PC-3 (cell line): ENCODE measurements at regions of chr10 and their contacts with region 1.

Region 1: GRCh38 chr10:75019370-75019769 is 92.1 kb upstream of the SAMD8 start:
- DNase-seq: peak; percentile 88
- ATAC-seq: peak; percentile 20; the same call in 1 of the 2 replicates
- H3K4me3 ChIP-seq: no peak overlapping the region
- H3K27ac ChIP-seq: no peak overlapping the region
- H3K4me1 ChIP-seq: peaks cover 14% of the 10 kb centered on the region
- H3K27me3 ChIP-seq: no peaks in the 10 kb centered on the region
- CTCF ChIP-seq: peak; percentile 98

Region 2: GRCh38 chr10:74262856-74263255 is 756.5 kb before region 1 on chr10:
- CTCF ChIA-PET with region 1: interaction called, 3 read pairs
- POLR2A ChIA-PET with region 1: interaction called, 4 read pairs
- intact Hi-C with region 1: loop called (anchors 1 kb)
- DNase-seq: no peak
- ATAC-seq: no peak
- H3K4me3 ChIP-seq: no peak overlapping the region
- H3K27ac ChIP-seq: no peak overlapping the region
- H3K4me1 ChIP-seq: peaks cover 12% of the 10 kb centered on the region
- H3K27me3 ChIP-seq: no peaks in the 10 kb centered on the region
- CTCF ChIP-seq: no peak

Region 3: DNA sequence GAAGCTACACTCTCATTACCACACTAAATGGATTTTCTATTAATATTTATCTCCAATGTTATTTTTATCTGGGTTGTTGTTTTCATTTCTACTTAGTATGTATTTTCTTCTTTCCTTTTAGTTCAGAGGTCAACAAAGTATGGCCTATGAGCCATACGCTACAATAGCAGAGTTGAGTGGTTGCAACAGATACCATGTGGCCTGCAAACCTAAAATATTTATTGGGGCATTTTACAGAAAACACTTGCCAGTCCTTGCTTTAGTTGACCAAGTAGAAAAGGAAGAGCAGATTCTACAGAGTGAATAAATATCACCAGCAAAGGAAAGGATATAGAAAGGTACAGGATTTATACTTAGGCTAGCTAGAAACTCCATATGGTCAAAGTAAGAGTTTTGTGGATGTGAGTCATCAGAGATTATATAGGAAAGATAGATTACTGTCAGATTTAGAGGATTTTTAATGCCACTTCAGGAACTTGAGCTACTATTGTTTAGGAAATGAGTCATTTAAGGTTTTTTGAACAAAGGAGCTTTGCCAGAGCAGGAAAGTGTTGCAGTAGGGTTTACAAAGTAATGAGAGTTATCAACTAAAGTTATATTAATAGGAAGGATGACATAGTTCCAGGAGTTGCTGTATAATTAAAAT is 516.3 kb before region 1 on chr10:
- CTCF ChIA-PET with region 1: no interaction called
- POLR2A ChIA-PET with region 1: no interaction called
- intact Hi-C with region 1: loop called (anchors 1 kb)
- DNase-seq: peak; percentile 100
- ATAC-seq: peak; percentile 88
- H3K4me3 ChIP-seq: 0 out of 2 replicates have a peak overlapping the region, but pooled peaks have one; percentile 1
- H3K27ac ChIP-seq: peak overlapping the region; percentile 69
- H3K4me1 ChIP-seq: peaks cover 44% of the 10 kb centered on the region
- H3K27me3 ChIP-seq: no peaks in the 10 kb centered on the region
- CTCF ChIP-seq: no peak

Region 4: DNA sequence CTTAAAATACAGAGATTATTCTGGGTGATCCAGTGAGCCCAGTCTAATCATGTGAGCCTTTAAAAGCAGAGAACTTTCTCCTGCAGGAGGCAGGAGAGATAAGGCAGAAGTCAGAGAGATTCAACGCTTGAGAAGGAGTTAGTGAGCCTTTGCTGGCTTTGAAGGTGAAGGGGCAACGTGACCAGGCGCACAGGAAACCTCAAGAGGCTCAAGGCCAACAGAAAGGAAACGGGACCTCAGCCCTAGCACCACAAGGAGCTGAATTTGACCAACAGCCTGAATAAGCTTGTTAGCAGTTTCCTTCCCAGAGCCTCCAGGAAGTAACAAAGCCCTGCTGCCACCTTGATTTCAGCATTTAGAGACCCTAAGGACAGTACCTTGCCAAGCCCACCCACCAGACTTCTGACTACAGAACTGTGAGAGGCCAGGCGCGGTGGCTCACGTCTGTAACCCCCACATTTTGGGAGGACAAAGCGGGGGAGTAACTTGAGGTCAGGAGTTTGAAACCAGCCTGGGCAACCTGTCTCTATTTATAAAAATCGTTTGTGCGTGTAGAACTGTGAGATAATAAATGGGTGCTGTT is 280.3 kb before region 1 on chr10:
- CTCF ChIA-PET with region 1: interaction called, 4 read pairs
- POLR2A ChIA-PET with region 1: no interaction called
- intact Hi-C with region 1: loop called (anchors 1 kb)
- DNase-seq: peak; percentile 71
- ATAC-seq: peak; percentile 64
- H3K4me3 ChIP-seq: no peak overlapping the region
- H3K27ac ChIP-seq: no peak overlapping the region
- H3K4me1 ChIP-seq: peaks cover 10% of the 10 kb centered on the region
- H3K27me3 ChIP-seq: no peaks in the 10 kb centered on the region
- CTCF ChIP-seq: peak; percentile 85

Region 5: DNA sequence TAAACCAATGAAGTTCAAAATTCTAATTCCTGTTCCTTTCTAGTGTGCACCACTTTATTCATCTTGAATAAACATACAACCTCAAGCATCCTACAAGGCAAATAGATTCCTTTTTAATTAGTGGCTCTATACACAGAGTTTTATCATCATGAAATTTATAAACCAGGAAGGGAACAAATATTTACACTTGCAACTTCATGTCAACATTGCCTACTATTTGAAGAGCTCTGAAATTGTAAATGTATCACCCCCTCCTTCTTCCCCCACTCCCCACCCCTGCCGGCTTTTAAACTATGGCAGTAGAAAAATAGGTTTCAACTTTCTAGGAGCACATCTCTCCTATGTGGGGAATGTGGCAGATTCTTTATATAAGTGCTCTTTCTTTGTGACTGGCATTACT is 143.4 kb before region 1 on chr10:
- CTCF ChIA-PET with region 1: interaction called, 6 read pairs
- POLR2A ChIA-PET with region 1: no interaction called
- intact Hi-C with region 1: loop called (anchors 1 kb)
- DNase-seq: peak; percentile 99
- ATAC-seq: peak; percentile 92
- H3K4me3 ChIP-seq: peak overlapping the region; percentile 1; the same call in 1 of the 2 replicates
- H3K27ac ChIP-seq: peak overlapping the region; percentile 67
- H3K4me1 ChIP-seq: peaks cover 56% of the 10 kb centered on the region
- H3K27me3 ChIP-seq: no peaks in the 10 kb centered on the region
- CTCF ChIP-seq: no peak

Region 6: DNA sequence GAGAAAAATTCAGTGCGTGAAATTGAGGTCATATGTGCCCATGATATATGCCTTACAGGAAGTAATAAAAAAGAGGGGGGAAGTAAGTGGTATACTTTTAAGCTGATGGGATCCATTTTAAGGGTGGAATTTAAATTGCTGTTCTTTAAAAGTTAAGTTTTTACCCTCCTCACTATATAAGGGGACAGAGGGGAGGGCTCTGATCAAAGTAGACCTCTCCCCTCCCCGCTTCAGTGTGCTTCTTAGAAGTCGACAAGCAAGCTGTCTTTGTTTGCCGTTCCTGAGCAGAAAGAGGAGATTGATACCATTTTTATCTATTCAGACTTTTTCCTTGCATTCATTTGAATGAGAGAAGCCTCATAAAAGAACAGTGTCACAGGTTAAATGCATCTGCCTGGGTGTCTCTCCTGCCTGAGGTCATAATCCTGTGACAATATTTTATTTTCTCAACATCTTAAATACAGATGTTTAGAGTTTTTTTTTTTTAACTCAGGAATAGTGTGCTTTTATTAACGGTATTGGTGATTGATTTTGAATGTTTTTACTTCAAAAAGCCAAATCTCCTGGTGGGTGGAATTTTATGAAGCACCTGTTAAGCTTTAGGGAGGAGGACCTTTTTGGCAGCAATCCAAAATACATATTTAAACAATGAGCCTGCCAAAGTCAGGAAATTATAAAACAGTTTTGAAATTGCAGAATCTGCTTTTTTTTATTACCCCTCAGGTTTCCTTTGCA is 51.3 kb before region 1 on chr10:
- CTCF ChIA-PET with region 1: interaction called, 16 read pairs
- POLR2A ChIA-PET with region 1: no interaction called
- intact Hi-C with region 1: no loop called
- DNase-seq: peak; percentile 100
- ATAC-seq: peak; percentile 73
- H3K4me3 ChIP-seq: peak overlapping the region; percentile 10
- H3K27ac ChIP-seq: peak overlapping the region; percentile 28
- H3K4me1 ChIP-seq: peaks cover 25% of the 10 kb centered on the region
- H3K27me3 ChIP-seq: no peaks in the 10 kb centered on the region
- CTCF ChIP-seq: no peak; the same call in 1 of the 2 replicates

Region 7: DNA sequence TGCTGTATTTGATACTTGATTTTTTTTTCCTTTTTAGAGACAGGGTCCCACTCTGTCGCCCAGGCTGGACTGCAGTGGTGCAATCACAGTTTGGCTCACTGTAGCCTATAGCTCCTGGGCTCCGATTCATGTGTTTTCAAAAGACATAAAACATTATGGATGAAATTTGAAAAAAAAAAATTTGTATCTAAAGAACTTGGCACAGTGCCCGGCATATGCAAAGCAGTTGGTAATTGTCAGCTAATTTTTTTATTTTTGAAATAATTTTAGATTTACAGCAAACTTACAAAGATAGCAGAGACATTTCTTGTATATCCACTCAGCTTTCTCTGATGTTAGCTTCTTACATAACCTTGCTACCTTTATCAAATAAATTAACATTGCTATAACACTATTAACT is 71.8 kb after region 1 on chr10:
- CTCF ChIA-PET with region 1: no interaction called
- POLR2A ChIA-PET with region 1: no interaction called
- intact Hi-C with region 1: no loop called
- DNase-seq: no peak
- ATAC-seq: no peak
- H3K4me3 ChIP-seq: no peak overlapping the region
- H3K27ac ChIP-seq: no peak overlapping the region
- H3K4me1 ChIP-seq: no peaks in the 10 kb centered on the region
- H3K27me3 ChIP-seq: no peaks in the 10 kb centered on the region
- CTCF ChIP-seq: no peak